ENCODE measurements at regions of chr5 and their contacts with region 1.

Region 1: GRCh38 chr5:133460172-133460758 is 152.1 kb downstream of the FSTL4 start:
- DNase-seq: peak; percentile 20
- H3K4me3 ChIP-seq: no peak overlapping the region
- H3K27ac ChIP-seq: no peak overlapping the region
- H3K4me1 ChIP-seq: peaks cover 10% of the 10 kb centered on the region
- H3K27me3 ChIP-seq: no peaks in the 10 kb centered on the region
- CTCF ChIP-seq: peak; percentile 82 to 96

Region 2: GRCh38 chr5:133240425-133241091 is 219.7 kb before region 1 on chr5:
- CTCF ChIA-PET with region 1: interaction called, 4 read pairs
- dilution Hi-C with region 1: no loop called
- in situ Hi-C with region 1: no loop called
- intact Hi-C with region 1: loop called (anchors 10 kb)
- DNase-seq: peak; percentile 98
- H3K4me3 ChIP-seq: no peak overlapping the region
- H3K27ac ChIP-seq: peak overlapping the region; percentile 49
- H3K4me1 ChIP-seq: peaks cover 38% of the 10 kb centered on the region
- H3K27me3 ChIP-seq: no peaks in the 10 kb centered on the region
- CTCF ChIP-seq: no peak

Region 3: GRCh38 chr5:133364936-133365707 is 95.1 kb before region 1 on chr5:
- CTCF ChIA-PET with region 1: no interaction called
- dilution Hi-C with region 1: no loop called
- in situ Hi-C with region 1: no loop called
- intact Hi-C with region 1: loop called (anchors 1 kb)
- DNase-seq: no peak
- H3K4me3 ChIP-seq: no peak overlapping the region
- H3K27ac ChIP-seq: no peak overlapping the region
- H3K4me1 ChIP-seq: peaks cover 4% of the 10 kb centered on the region
- H3K27me3 ChIP-seq: no peaks in the 10 kb centered on the region
- CTCF ChIP-seq: peak; percentile 41 to 52